ENCODE measurements at regions of chr12 and their contacts with region 1.

Region 1: GRCh38 chr12:54398995-54399793 is 14.7 kb upstream of the ZNF385A start:
- DNase-seq: no peak
- ATAC-seq: peak; percentile 98
- H3K4me3 ChIP-seq: no peak overlapping the region
- H3K27ac ChIP-seq: no peak overlapping the region
- H3K4me1 ChIP-seq: no peaks in the 10 kb centered on the region
- H3K27me3 ChIP-seq: no peaks in the 10 kb centered on the region; a peak in 1 of 4 replicates
- CTCF ChIP-seq: peak; percentile 98 to 99 (median 99)
- EP300 ChIP-seq: no peak
- POLR2A ChIP-seq: no peak
- RAD21 ChIP-seq: peak; percentile 98

Region 2: GRCh38 chr12:54379401-54380201 is 19.6 kb before region 1 on chr12:
- CTCF ChIA-PET with region 1: interaction called, 51 read pairs
- POLR2A ChIA-PET with region 1: no interaction called
- RAD21 ChIA-PET with region 1: interaction called, 3 read pairs
- SMC1A ChIA-PET with region 1: interaction called, 4 read pairs
- in situ Hi-C with region 1: no loop called
- intact Hi-C with region 1: no loop called
- DNase-seq: no peak
- ATAC-seq: peak; percentile 95
- H3K4me3 ChIP-seq: no peak overlapping the region
- H3K27ac ChIP-seq: no peak overlapping the region
- H3K4me1 ChIP-seq: peaks cover 4% of the 10 kb centered on the region
- H3K27me3 ChIP-seq: no peaks in the 10 kb centered on the region
- CTCF ChIP-seq: peak; percentile 100; a peak in 5 of 6 replicates
- EP300 ChIP-seq: no peak
- POLR2A ChIP-seq: no peak
- RAD21 ChIP-seq: peak; percentile 73

Region 3: DNA sequence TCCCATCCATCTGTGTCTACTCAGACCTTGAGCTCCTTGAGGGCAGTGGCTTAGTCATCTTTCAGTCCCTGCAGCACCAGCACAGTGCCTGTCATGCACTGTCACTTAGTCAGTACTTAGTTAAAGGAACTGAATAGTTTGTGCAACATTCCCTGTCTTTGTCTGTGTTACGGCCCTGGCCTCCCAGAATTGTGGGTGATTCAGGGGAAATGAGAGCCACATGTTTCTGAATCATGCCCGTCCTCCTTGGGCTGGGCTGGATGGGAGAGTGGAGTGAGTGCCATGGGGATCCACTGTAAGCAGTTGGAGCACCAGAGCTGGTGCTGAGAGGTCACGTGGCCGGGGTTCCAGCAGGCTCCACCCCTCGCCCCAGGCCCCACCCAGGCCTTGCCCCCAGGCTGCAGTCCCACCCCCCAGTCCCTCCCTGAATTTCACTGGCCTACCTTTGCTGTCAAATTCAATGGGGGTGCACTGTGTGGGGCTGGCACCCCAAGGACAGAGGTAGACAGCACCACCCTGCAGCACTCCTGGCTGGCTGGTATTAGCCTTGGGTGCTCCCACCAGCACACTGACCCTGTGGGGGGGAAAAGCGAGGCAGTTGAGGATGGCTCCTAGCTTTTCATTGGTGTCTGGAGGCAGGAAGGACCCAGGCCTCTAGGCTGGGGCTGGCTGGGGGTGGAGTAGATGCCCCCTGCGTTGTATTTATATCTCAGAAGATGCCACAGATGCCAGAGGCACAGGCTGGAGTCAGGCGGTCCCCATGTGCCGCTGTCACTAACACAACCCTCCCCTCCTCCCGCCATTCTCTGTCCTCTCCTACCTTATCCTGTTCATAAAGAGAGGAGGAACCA is 12.4 kb after region 1 on chr12:
- CTCF ChIA-PET with region 1: interaction called, 251 read pairs
- POLR2A ChIA-PET with region 1: interaction called, 4 read pairs
- RAD21 ChIA-PET with region 1: interaction called, 16 read pairs
- SMC1A ChIA-PET with region 1: interaction called, 31 read pairs
- in situ Hi-C with region 1: no loop called
- intact Hi-C with region 1: no loop called
- DNase-seq: no peak
- ATAC-seq: peak; percentile 70
- H3K4me3 ChIP-seq: no peak overlapping the region
- H3K27ac ChIP-seq: no peak overlapping the region
- H3K4me1 ChIP-seq: peaks cover 16% of the 10 kb centered on the region
- H3K27me3 ChIP-seq: no peaks in the 10 kb centered on the region; a peak in 1 of 4 replicates
- CTCF ChIP-seq: no peak
- EP300 ChIP-seq: no peak
- POLR2A ChIP-seq: no peak
- RAD21 ChIP-seq: no peak

Region 4: DNA sequence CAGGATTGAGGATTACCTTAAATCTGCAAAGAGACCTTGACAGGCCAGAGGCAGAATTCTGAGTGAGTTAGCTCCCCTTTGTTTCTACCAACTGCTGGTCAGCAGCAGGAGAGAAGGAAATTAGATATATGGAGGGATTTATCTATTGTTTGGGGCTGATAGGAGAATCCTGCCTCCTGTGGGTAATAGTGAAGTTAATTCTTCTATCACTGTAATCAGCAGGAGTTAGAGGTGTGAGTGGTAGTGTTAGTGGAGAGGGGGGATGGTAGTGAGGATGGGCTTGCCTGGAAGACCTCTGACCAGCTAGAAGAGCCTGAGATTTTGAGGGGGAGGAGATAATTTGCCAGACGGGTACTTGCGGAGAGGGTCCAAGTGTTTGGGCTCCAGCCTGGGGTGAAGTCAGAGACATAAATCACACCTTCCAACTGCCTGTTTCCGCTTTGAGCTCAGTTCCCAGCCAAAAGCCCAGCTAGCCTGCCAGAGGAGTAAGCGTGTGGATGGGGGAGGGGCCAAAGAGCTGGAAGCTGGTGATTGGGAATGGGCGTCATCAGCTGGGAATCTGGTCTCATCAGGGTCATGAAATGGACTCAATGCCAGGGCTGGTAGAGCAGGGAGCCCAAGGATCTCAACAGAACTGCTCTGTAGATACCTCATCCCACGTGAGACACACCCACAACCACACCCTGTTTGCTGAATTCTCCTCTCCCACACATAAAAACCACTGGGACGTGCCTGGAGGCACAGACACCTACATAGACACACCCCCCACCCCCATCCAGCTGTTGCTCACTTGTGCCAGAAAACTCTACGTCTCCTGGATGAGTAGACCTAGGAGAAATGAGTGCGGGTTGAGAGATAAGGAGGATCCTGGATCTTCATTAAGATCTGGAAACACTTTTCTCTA is 33.0 kb after region 1 on chr12:
- CTCF ChIA-PET with region 1: interaction called, 1,071 read pairs
- POLR2A ChIA-PET with region 1: interaction called, 43 read pairs
- RAD21 ChIA-PET with region 1: interaction called, 296 read pairs
- SMC1A ChIA-PET with region 1: interaction called, 469 read pairs
- in situ Hi-C with region 1: loop called (anchors 5 kb)
- intact Hi-C with region 1: no loop called
- DNase-seq: no peak
- ATAC-seq: no peak
- H3K4me3 ChIP-seq: no peak overlapping the region
- H3K27ac ChIP-seq: no peak overlapping the region
- H3K4me1 ChIP-seq: peaks cover 5% of the 10 kb centered on the region
- H3K27me3 ChIP-seq: peaks cover 0 to 5% of the 10 kb centered on the region in 2 experiments; a peak in 2 of 4 replicates
- CTCF ChIP-seq: no peak
- EP300 ChIP-seq: no peak
- POLR2A ChIP-seq: no peak
- RAD21 ChIP-seq: no peak

Region 5: GRCh38 chr12:54497883-54498282 is 98.7 kb after region 1 on chr12:
- CTCF ChIA-PET with region 1: interaction called, 24 read pairs
- POLR2A ChIA-PET with region 1: interaction called, 3 read pairs
- RAD21 ChIA-PET with region 1: interaction called, 15 read pairs
- SMC1A ChIA-PET with region 1: interaction called, 15 read pairs
- in situ Hi-C with region 1: no loop called
- intact Hi-C with region 1: no loop called
- DNase-seq: no peak
- ATAC-seq: peak; percentile 3
- H3K4me3 ChIP-seq: peak overlapping the region; percentile 82
- H3K27ac ChIP-seq: peak overlapping the region; percentile 91
- H3K4me1 ChIP-seq: peaks cover 3% of the 10 kb centered on the region; the same call in 1 of the 2 replicates
- H3K27me3 ChIP-seq: no peaks in the 10 kb centered on the region
- CTCF ChIP-seq: no peak
- EP300 ChIP-seq: no peak
- POLR2A ChIP-seq: no peak
- RAD21 ChIP-seq: no peak

Region 6: GRCh38 chr12:54967461-54967860 is 568.3 kb after region 1 on chr12:
- CTCF ChIA-PET with region 1: no interaction called
- POLR2A ChIA-PET with region 1: no interaction called
- RAD21 ChIA-PET with region 1: no interaction called
- SMC1A ChIA-PET with region 1: no interaction called
- in situ Hi-C with region 1: no loop called
- intact Hi-C with region 1: no loop called
- DNase-seq: no peak
- ATAC-seq: no peak
- H3K4me3 ChIP-seq: no peak overlapping the region
- H3K27ac ChIP-seq: no peak overlapping the region
- H3K4me1 ChIP-seq: no peaks in the 10 kb centered on the region
- H3K27me3 ChIP-seq: no peaks in the 10 kb centered on the region
- CTCF ChIP-seq: no peak
- EP300 ChIP-seq: no peak
- POLR2A ChIP-seq: no peak
- RAD21 ChIP-seq: no peak

Region 7: DNA sequence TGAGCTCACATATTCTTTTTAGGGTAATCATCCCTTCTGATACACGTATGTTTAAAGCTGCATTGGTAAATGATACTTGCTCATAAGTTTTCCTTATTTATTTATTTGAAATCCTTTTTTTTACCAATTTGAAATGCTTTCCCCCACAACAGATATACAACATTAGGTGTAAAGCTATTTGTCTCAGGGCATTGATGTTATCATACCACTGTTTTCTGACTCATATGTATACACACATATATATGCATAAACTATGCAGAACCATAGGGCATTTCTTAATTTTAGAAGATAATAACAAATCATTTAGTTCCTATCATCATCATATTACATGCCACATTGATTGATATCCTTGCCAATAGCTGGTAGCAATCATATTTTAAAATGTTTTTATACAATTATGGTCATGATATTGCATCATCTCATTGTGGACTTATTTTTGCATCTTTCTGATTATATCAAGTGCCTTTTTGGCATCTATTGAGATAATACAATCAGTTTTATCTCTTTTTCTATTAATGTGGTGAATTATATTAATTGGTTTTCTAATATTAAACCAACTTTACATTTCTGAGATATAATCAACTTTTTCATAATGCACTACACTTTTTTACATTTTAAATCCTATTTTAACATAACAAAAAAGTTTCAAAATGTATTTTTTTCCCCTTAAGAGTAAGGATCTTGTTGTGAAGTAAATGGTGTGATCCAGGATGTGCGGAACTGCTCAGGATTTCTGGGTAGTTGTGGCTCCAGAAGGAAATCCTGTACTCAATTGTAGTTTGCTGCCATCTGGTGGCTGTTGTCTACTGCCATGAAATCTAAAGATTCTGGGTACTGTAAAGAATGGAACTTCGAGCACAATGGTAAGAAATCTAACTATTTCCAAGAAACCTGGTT is 743.7 kb after region 1 on chr12:
- CTCF ChIA-PET with region 1: no interaction called
- POLR2A ChIA-PET with region 1: no interaction called
- RAD21 ChIA-PET with region 1: no interaction called
- SMC1A ChIA-PET with region 1: no interaction called
- in situ Hi-C with region 1: no loop called
- intact Hi-C with region 1: no loop called
- DNase-seq: no peak
- ATAC-seq: peak; percentile 68
- H3K4me3 ChIP-seq: no peak overlapping the region
- H3K27ac ChIP-seq: no peak overlapping the region
- H3K4me1 ChIP-seq: no peaks in the 10 kb centered on the region
- H3K27me3 ChIP-seq: no peaks in the 10 kb centered on the region
- CTCF ChIP-seq: peak; percentile 61 to 72 (median 71)
- EP300 ChIP-seq: no peak
- POLR2A ChIP-seq: no peak
- RAD21 ChIP-seq: peak; percentile 58

Measured in GM12878 (cell line).